ENCODE measurements at regions of chr10 and their contacts with region 1.

Region 1: DNA sequence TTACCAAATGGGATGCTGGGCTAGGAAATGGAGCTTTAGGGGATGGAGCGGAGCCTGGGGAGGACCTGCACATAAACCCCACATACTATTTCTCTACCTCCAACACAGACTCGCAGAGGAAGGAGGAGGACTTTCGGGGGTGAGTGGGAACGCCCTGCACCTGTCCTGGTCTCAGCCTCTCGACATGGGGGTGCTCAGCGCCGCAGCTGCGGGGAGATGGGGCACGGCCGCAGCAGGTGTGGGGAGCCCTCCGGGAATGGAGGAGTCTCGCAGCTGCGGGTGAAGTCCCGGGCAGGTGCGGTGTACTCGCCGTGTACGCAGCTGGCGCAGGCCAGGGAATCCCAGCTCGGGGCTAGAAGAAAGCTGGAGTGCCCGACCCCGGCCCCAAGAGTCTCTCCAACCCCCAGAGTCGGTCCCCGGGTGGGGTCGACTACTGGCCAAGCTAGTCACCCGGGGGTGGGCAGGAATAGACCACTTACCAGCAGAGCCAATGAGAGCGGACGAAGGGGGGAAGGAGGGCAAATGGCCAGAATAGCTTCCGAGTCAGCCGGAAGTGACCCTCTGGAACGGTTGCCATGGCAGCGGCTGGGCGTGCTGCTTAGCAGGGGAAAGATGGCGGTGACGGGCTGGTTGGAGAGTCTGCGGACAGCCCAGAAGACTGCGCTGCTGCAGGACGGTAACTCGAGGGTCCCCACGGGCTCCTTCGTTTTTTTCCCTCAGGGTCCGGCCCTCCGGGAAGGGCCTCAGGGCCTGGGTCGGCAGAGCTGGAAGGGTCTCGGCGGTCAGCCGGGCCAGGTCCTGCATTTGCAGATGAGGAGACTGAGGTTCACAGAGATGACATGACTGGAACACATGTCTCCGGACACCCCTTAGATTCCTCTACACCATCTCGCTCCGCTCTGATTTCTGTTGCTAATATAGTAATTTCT is at the starts of genes DPCD and POLL:
- DNase-seq: peak; percentile 75 to 95
- H3K4me3 ChIP-seq: peak within 1 kb of the TSS; percentile 83 to 96 (median 88)
- H3K27ac ChIP-seq: no peak within 1 kb of the TSS
- H3K4me1 ChIP-seq: peaks cover 0 to 5% (median 4%) of the 10 kb centered on the region in 4 experiments; a peak in 6 of 7 replicates
- H3K27me3 ChIP-seq: no peaks in the 10 kb centered on the region
- CTCF ChIP-seq: no peak
- EP300 ChIP-seq: no peak
- POLR2A ChIP-seq: peak in 1 of 2 experiments; percentile 47; a peak in 1 of 3 replicates
- RAD21 ChIP-seq: no peak
- total RNA-seq, gene DPCD: 18.8 and 21.2 TPM in 2 replicates
- total RNA-seq, gene POLL: 26.1 and 26.8 TPM in 2 replicates

Region 2: GRCh38 chr10:101429423-101429822 is 158.6 kb before region 1 on chr10:
- CTCF ChIA-PET with region 1: no interaction called
- POLR2A ChIA-PET with region 1: no interaction called
- DNase-seq: no peak
- H3K4me3 ChIP-seq: no peak overlapping the region
- H3K27ac ChIP-seq: no peak overlapping the region
- H3K4me1 ChIP-seq: no peaks in the 10 kb centered on the region
- H3K27me3 ChIP-seq: no peaks in the 10 kb centered on the region
- CTCF ChIP-seq: no peak
- EP300 ChIP-seq: no peak
- POLR2A ChIP-seq: no peak
- RAD21 ChIP-seq: no peak

Region 3: GRCh38 chr10:101512738-101513137 is 75.3 kb before region 1 on chr10:
- CTCF ChIA-PET with region 1: no interaction called
- POLR2A ChIA-PET with region 1: no interaction called
- DNase-seq: no peak
- H3K4me3 ChIP-seq: no peak overlapping the region
- H3K27ac ChIP-seq: no peak overlapping the region
- H3K4me1 ChIP-seq: no peaks in the 10 kb centered on the region
- H3K27me3 ChIP-seq: no peaks in the 10 kb centered on the region
- CTCF ChIP-seq: no peak
- EP300 ChIP-seq: no peak
- POLR2A ChIP-seq: no peak
- RAD21 ChIP-seq: no peak

Region 4: GRCh38 chr10:101576211-101576863 is 11.7 kb before region 1 on chr10:
- CTCF ChIA-PET with region 1: interaction called, 56 read pairs
- POLR2A ChIA-PET with region 1: interaction called, 42 read pairs
- DNase-seq: no peak
- H3K4me3 ChIP-seq: no peak overlapping the region
- H3K27ac ChIP-seq: no peak overlapping the region
- H3K4me1 ChIP-seq: peaks cover 3 to 9% (median 8%) of the 10 kb centered on the region in 4 experiments
- H3K27me3 ChIP-seq: peaks cover 2 to 21% (median 14%) of the 10 kb centered on the region in 4 experiments; a peak in 6 of 7 replicates
- CTCF ChIP-seq: no peak
- EP300 ChIP-seq: no peak
- POLR2A ChIP-seq: no peak
- RAD21 ChIP-seq: no peak